Gastrocnemius medialis (tissue), 4 donors: ENCODE measurements at regions of chr7 and their contacts with region 1.

Region 1: DNA sequence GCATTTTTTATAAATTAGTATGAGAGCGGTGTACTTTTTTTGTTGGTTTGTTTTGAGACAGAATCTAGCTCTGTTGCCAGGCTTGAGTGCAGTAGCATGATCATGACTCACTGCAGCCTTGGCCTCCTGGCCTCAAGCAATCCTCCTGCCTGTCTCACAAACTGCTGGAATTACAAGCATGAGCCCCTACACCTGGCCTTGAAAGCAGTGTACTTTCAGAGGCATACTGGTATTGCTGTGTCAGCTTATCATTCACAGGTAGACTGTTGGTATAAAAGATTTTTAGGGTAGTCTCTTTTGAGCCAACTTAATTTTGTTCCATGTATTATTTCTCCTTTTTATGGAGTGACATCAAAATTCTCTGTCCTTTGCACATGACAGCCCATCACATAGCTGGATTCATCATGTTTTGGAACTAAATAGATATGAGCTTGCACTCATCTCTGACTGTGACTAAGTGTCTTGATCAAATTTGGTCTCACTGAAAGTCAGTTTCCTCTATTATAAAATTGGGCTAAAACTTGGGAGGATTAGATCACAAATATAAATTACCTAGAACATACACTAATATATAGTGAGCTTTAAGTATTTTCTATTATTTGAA is 12.4 kb downstream of the GNAT3 start:
- DNase-seq: peak; percentile 67 to 78
- ATAC-seq: peak; percentile 92 to 94
- H3K4me3 ChIP-seq: peak overlapping the region in 1 of 4 donors; percentile 3
- H3K27ac ChIP-seq: peak overlapping the region; percentile 79 to 85 (median 82)
- H3K4me1 ChIP-seq: peaks cover 25 to 32% of the 10 kb centered on the region in 2 donors
- H3K27me3 ChIP-seq: no peaks in the 10 kb centered on the region
- CTCF ChIP-seq: no peak
- POLR2A ChIP-seq: no peak

Region 2: GRCh38 chr7:80552304-80552703 is 52.9 kb after region 1 on chr7:
- in situ Hi-C with region 1: loop called in 1 of 4 experiments (anchors 10 kb)
- intact Hi-C with region 1: no loop called
- DNase-seq: no peak
- ATAC-seq: no peak
- H3K4me3 ChIP-seq: no peak overlapping the region
- H3K27ac ChIP-seq: peak overlapping the region in 3 of 4 donors; percentile 52 to 69 (median 53)
- H3K4me1 ChIP-seq: peaks cover 7 to 35% of the 10 kb centered on the region in 2 donors
- H3K27me3 ChIP-seq: no peaks in the 10 kb centered on the region
- CTCF ChIP-seq: no peak
- POLR2A ChIP-seq: no peak

Region 3: GRCh38 chr7:80646083-80646865 is 146.8 kb after region 1 on chr7:
- in situ Hi-C with region 1: loop called in 1 of 4 experiments (anchors 10 kb)
- intact Hi-C with region 1: loop called (anchors 5 kb)
- DNase-seq: no peak
- ATAC-seq: no peak
- H3K4me3 ChIP-seq: peak overlapping the region; percentile 26 to 35 (median 31)
- H3K27ac ChIP-seq: peak overlapping the region; percentile 82 to 92 (median 86)
- H3K4me1 ChIP-seq: peaks cover 32 to 48% of the 10 kb centered on the region in 2 donors
- H3K27me3 ChIP-seq: no peaks in the 10 kb centered on the region
- CTCF ChIP-seq: no peak
- POLR2A ChIP-seq: no peak